Sigmoid colon (tissue), 7 donors: ENCODE measurements at regions of chr12 and their contacts with region 1.

Region 1: DNA sequence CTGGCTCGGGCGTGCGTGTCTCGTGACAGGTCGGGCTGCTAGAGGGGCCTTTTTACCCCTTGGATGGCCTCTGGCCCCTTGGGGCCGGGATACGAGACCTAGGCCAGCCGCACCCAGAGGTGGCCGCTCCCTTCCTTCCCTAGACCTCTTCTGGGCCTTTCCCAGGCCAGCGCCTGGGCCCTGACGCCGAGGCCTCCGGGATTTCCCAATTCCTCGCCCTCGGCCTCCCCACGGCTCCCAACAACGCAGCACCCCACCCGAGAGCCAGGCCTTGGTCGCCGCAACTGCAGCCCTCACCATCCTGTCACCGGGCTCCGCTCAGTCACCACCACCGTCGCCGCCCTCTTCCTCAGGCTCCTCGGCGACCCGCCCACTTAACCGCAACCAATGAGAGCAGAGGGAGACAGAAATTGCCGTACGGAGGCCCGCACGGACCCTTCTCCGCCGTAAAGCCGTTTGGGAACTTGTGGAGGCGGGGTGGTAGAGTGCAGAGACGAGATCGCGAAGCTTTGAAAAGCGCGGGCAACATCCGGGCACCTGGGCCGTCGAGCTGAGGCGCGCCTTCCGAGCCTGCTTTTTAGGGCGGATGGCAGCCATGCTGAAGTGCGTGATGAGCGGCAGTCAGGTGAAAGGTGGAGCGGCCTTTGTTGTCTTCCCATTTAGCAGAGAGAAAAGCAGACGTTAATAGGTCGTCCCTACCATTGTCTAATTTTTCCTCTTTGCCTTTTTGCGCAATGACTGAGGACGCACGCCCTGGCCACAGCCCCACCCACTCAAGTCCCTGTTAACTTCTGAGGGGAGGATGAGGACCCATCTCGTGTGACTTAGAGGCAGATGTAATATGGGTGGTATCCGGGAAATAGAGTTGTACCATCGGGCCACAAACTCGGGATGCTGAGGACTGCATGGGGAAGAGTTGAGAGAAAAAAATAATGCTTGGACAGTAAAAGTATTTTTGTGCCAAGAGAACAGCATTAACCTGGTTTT is at the starts of genes RAD9B and VPS29:
- DNase-seq: peak; percentile 99
- H3K4me3 ChIP-seq: peak within 1 kb of the TSS; percentile 88 to 99 (median 98)
- H3K27ac ChIP-seq: peak within 1 kb of the TSS; percentile 92 to 96 (median 96)
- H3K4me1 ChIP-seq: peaks cover 0 to 43% (median 27%) of the 10 kb centered on the region in 4 donors
- H3K27me3 ChIP-seq: no peaks in the 10 kb centered on the region
- CTCF ChIP-seq: no peak
- EP300 ChIP-seq: peak in 1 of 4 donors; percentile 84
- POLR2A ChIP-seq: peak; percentile 91 to 92
- total RNA-seq, gene RAD9B: 0.41 to 0.71 (median 0.61) TPM
- total RNA-seq, gene VPS29: 120 to 209 (median 172) TPM

Region 2: GRCh38 chr12:110449799-110450497 is 52.1 kb before region 1 on chr12 and contains the start of gene ARPC3:
- intact Hi-C with region 1: loop called (anchors 5 kb)
- DNase-seq: peak; percentile 97
- H3K4me3 ChIP-seq: peak within 1 kb of the TSS; percentile 76 to 90 (median 82)
- H3K27ac ChIP-seq: peak within 1 kb of the TSS; percentile 90 to 93 (median 90)
- H3K4me1 ChIP-seq: peaks cover 2 to 26% (median 20%) of the 10 kb centered on the region in 4 donors
- H3K27me3 ChIP-seq: no peaks in the 10 kb centered on the region
- CTCF ChIP-seq: peak; percentile 79 to 91 (median 86)
- EP300 ChIP-seq: no peak
- POLR2A ChIP-seq: peak; percentile 17 to 56
- total RNA-seq, gene ARPC3: 156 to 304 (median 231) TPM

Region 3: GRCh38 chr12:110468212-110469048 is 33.6 kb before region 1 on chr12 and contains the starts of genes FAM216A and GPN3:
- intact Hi-C with region 1: loop called (anchors 1 kb)
- DNase-seq: peak; percentile 98
- H3K4me3 ChIP-seq: peak within 1 kb of the TSS; percentile 66 to 94 (median 78)
- H3K27ac ChIP-seq: peak within 1 kb of the TSS; percentile 96 to 99 (median 98)
- H3K4me1 ChIP-seq: peaks cover 0 to 35% (median 23%) of the 10 kb centered on the region in 4 donors
- H3K27me3 ChIP-seq: no peaks in the 10 kb centered on the region
- CTCF ChIP-seq: no peak
- EP300 ChIP-seq: peak in 1 of 4 donors; percentile 75
- POLR2A ChIP-seq: peak in 1 of 2 donors; percentile 48
- total RNA-seq, gene FAM216A: 7.5 to 13.0 (median 8.3) TPM
- total RNA-seq, gene GPN3: 16.1 to 22.8 (median 20.6) TPM

Region 4: DNA sequence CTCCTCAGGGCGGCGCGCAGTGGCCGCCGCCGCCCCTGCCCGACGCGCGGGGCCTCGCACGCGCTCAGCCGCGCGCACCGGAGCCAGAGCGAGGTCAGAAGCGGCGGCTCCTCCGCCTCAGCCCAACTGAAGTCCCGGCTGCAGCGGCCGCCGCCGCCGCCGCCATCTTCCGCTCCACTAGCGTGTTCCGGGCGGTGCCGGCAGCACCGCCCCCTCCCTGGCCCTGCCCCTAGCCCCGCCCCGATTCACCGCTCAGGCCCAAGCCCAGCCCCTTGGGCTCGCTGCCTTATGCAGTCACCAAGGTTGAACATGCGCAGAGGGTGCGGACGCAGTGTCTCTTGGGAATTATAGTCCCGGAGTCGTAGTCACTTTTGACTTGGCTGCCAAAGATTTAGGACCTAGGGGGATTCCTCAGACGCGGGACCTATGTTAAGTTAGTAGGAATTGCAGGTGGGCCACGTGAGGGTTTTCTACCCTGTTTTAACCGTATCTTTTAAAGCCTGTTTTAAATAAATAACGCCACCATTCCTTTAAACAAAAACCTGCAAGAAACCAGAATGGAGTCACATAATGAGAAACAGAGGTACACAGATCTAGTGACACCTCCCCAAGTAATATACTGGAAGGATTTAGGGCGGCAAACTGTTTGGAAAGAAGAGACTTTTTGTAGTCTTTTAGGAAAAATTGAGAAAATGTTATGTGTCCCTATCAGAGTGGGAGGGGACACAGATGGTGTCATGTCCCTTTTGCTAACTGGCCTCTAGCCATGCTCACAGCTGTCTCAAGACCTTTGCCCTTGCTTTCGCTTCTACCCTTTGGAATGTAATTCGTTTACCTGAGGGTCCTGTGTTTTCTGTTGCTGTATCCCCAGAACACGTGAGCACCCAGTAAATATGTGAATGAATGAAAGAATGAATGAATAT is 81.4 kb after region 1 on chr12 and contains the start of gene PPTC7:
- intact Hi-C with region 1: loop called (anchors 5 kb)
- DNase-seq: peak; percentile 98
- H3K4me3 ChIP-seq: peak within 1 kb of the TSS; percentile 84 to 93 (median 92)
- H3K27ac ChIP-seq: peak within 1 kb of the TSS; percentile 95 to 97 (median 96)
- H3K4me1 ChIP-seq: peaks cover 0 to 62% (median 59%) of the 10 kb centered on the region in 4 donors
- H3K27me3 ChIP-seq: no peaks in the 10 kb centered on the region
- CTCF ChIP-seq: no peak
- EP300 ChIP-seq: no peak
- POLR2A ChIP-seq: peak in 1 of 2 donors; percentile 58
- total RNA-seq, gene PPTC7: 19.4 to 30.3 (median 22.5) TPM

Region 5: GRCh38 chr12:110766311-110767154 is 264.5 kb after region 1 on chr12:
- intact Hi-C with region 1: no loop called
- DNase-seq: no peak
- H3K4me3 ChIP-seq: no peak overlapping the region
- H3K27ac ChIP-seq: no peak overlapping the region
- H3K4me1 ChIP-seq: no peaks in the 10 kb centered on the region
- H3K27me3 ChIP-seq: no peaks in the 10 kb centered on the region
- CTCF ChIP-seq: no peak
- EP300 ChIP-seq: no peak
- POLR2A ChIP-seq: no peak

Region 6: DNA sequence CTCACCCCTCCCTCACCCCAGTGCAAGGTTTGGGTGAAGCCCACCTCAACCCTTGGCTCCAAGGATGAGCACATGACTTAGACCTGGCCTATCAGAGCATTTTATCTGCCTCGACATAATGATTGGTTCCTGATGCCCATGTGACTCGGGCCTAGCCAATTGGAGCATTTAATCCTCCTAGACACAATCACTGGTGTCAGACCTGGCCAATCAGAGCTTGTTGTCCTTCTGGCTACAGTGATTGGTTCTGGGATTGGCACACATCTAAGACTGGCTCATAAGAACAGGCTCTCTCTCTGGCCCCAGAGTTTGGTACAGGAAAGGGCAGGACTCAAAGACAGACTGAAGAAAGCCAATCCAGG is 491.4 kb after region 1 on chr12:
- intact Hi-C with region 1: no loop called
- DNase-seq: no peak
- H3K4me3 ChIP-seq: no peak overlapping the region
- H3K27ac ChIP-seq: no peak overlapping the region
- H3K4me1 ChIP-seq: no peaks in the 10 kb centered on the region
- H3K27me3 ChIP-seq: no peaks in the 10 kb centered on the region
- CTCF ChIP-seq: no peak
- EP300 ChIP-seq: no peak
- POLR2A ChIP-seq: no peak